Left ventricle myocardium inferior (tissue), 1 donor: ENCODE measurements at regions of chr7 and their contacts with region 1.

Region 1: GRCh38 chr7:74206589-74207120 is 3.2 kb upstream of the LAT2 start:
- DNase-seq: peak; percentile 88
- H3K4me3 ChIP-seq: peak overlapping the region; percentile 49
- H3K27ac ChIP-seq: no peak overlapping the region
- H3K4me1 ChIP-seq: peaks cover 7% of the 10 kb centered on the region
- H3K27me3 ChIP-seq: no peaks in the 10 kb centered on the region
- CTCF ChIP-seq: peak; percentile 99

Region 2: DNA sequence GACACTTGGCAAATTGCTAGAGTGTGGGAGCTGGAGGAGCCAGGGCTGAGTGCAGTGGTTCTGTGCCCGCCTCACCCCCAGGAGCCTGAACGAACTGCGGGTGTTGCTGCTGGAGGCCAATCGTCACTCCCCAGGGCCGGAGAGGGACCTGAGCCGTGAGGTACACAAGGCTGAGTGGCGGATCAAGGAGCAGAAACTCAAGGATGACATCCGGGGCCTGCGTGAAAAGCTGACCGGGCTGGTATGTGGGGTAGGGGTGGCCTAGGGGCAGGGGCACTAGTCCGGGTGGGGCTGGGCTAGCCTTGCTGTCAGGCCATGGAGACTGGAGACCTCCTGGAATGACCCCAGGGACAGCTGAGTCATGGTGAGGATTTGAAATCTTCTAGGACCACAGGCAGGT is 190.3 kb after region 1 on chr7:
- intact Hi-C with region 1: loop called (anchors 5 kb)
- DNase-seq: no peak
- H3K4me3 ChIP-seq: no peak overlapping the region
- H3K27ac ChIP-seq: no peak overlapping the region
- H3K4me1 ChIP-seq: peaks cover 17% of the 10 kb centered on the region
- H3K27me3 ChIP-seq: no peaks in the 10 kb centered on the region
- CTCF ChIP-seq: no peak